ENCODE measurements at regions of chr5 and their contacts with region 1.

Region 1: DNA sequence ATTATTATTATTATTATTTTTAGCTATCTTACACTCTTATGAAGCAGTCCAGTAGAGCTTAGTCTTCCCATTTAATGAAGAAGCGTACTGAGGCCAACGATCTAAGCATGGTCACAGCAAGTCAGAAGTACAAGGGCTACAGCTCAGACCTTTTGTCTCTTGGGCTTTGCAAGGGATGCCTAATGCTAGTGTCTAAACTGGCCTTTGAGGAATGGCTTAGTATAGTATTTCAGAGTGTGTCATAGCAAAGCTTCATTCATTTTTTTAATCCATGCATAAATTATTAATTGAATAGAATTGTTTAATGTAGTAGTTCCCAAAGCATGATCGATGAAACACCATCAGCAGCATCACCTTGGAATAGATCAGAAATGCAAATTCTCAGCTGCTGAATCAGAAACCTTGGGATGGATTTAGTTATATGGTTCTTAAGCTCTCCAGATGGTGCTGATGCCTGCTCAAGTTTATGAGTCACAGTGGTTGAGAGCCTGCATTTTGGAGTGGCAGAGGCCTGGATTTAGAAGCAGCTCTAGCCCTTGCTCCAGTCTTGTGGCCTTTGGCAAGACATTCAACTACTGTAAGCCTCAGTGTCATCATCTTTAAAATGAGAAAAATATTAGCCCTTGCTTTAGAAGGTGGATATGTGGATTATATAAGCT is 6.1 kb downstream of the IL12B start:
- DNase-seq: no peak
- H3K4me3 Mint-ChIP-seq: no peak overlapping the region
- H3K27ac Mint-ChIP-seq: no peak overlapping the region
- H3K4me1 Mint-ChIP-seq: no peaks in the 10 kb centered on the region
- H3K27me3 Mint-ChIP-seq: peaks cover 23% of the 10 kb centered on the region

Region 2: DNA sequence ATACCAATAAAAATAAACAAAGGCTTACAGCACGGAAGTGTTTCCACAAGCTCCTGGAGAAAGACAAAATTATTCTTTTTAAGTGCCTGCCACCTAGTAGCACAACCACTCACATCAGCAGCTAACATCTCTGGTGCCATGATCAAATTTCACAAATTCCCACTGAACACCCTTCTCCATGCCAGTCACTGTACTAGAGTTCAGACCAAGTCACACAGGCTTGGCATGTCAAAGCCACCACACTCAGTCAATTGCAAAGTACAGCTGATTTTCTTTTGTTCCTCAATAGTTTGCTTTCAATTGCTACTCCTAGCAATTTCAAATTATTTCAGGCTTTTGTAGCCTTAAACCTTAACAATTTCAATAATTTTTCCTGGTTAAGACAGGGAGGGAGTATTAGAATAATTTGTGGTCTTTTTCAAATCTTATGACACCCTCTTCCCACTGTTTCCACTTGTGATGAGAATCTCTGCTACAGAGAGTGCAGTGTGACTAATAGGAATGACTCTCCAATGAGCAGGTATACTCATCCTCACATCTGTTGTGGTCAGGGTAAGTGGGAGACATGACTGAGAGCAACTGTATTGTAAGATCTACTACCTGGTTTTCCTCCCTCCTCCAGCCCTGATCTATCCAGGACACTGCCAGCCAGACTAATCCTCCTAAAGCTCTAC is 161.1 kb before region 1 on chr5:
- CTCF ChIA-PET with region 1: no interaction called
- POLR2A ChIA-PET with region 1: no interaction called
- DNase-seq: no peak
- H3K4me3 Mint-ChIP-seq: no peak overlapping the region
- H3K27ac Mint-ChIP-seq: no peak overlapping the region
- H3K4me1 Mint-ChIP-seq: peaks cover 17% of the 10 kb centered on the region
- H3K27me3 Mint-ChIP-seq: no peaks in the 10 kb centered on the region

Region 3: GRCh38 chr5:159209438-159210305 is 114.6 kb before region 1 on chr5 and contains the start of gene RNF145:
- CTCF ChIA-PET with region 1: no interaction called
- POLR2A ChIA-PET with region 1: no interaction called
- DNase-seq: peak; percentile 86
- H3K4me3 Mint-ChIP-seq: peak within 1 kb of the TSS; percentile 85
- H3K27ac Mint-ChIP-seq: peak within 1 kb of the TSS; percentile 94
- H3K4me1 Mint-ChIP-seq: peaks cover 51% of the 10 kb centered on the region
- H3K27me3 Mint-ChIP-seq: no peaks in the 10 kb centered on the region
- total RNA-seq, gene RNF145: 133 to 145 TPM

Region 4: GRCh38 chr5:159310511-159310910 is 13.7 kb before region 1 on chr5:
- CTCF ChIA-PET with region 1: interaction called, 10 read pairs
- POLR2A ChIA-PET with region 1: no interaction called
- DNase-seq: peak; percentile 40
- H3K4me3 Mint-ChIP-seq: peak overlapping the region; percentile 26
- H3K27ac Mint-ChIP-seq: no peak overlapping the region
- H3K4me1 Mint-ChIP-seq: peaks cover 10% of the 10 kb centered on the region
- H3K27me3 Mint-ChIP-seq: peaks cover 40% of the 10 kb centered on the region

Region 5: GRCh38 chr5:159660401-159660800 is 336.2 kb after region 1 on chr5:
- CTCF ChIA-PET with region 1: no interaction called
- POLR2A ChIA-PET with region 1: no interaction called
- DNase-seq: no peak
- H3K4me3 Mint-ChIP-seq: no peak overlapping the region
- H3K27ac Mint-ChIP-seq: no peak overlapping the region
- H3K4me1 Mint-ChIP-seq: no peaks in the 10 kb centered on the region
- H3K27me3 Mint-ChIP-seq: peaks cover 2% of the 10 kb centered on the region